H1 (cell line): ENCODE measurements at regions of chr20 and their contacts with region 1.

Region 1: GRCh38 chr20:35297155-35297554 is 4.9 kb upstream of the FAM83C start:
- DNase-seq: no peak
- H3K4me3 ChIP-seq: no peak overlapping the region
- H3K27ac ChIP-seq: no peak overlapping the region
- H3K4me1 ChIP-seq: no peaks in the 10 kb centered on the region; a peak in 2 of 7 replicates
- H3K27me3 ChIP-seq: no peaks in the 10 kb centered on the region
- CTCF ChIP-seq: no peak
- EP300 ChIP-seq: no peak
- POLR2A ChIP-seq: no peak
- RAD21 ChIP-seq: no peak

Region 2: DNA sequence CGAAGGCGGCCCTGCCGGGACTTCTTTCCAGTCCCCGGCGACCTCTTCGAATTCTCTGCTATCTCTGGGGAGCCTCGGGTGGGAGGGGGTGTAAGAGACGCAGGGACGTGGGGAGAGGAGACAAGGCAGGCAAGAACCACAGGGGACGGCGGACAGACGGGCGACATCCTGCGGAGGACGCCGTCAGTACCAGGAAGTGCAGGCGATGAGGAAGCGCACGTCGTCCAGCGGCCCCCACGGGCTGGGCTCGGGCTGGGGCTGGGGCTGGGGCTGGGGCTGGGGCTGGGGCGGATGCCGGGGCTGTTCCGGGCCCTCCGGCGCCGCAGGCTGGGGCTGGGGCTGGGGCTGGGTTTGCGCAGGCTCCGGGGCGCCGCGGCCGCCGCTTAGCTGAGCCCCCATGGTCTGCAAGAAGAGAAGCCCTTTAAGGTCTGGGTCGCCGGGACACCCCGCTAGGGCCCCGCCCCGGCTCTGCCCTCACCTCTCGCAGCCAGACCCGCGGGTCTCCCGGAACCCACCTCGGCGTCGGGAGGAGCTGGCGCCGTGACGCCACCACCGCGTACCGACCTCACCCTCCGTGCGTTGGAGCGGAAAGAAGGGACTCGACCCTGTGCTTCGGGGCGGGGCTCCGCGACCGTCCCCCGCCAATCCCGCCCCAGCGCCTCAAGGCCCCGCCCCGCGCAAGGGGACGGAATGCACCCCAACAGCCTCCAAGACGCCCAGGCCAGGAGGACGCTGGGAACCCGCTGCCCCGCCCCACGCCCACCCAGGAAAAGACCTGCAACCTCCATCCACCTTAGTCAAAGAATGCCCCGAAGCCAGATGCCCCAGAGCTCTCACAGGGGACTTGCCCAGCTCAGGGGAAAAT is 19.4 kb before region 1 on chr20 and contains the start of gene MMP24OS:
- CTCF ChIA-PET with region 1: interaction called, 104 read pairs
- POLR2A ChIA-PET with region 1: interaction called, 39 read pairs
- DNase-seq: peak; percentile 86 to 91
- H3K4me3 ChIP-seq: peak within 1 kb of the TSS; percentile 40 to 73 (median 66)
- H3K27ac ChIP-seq: 0 out of 2 replicates have a peak within 1 kb of the TSS, but pooled peaks have one; percentile 22
- H3K4me1 ChIP-seq: peaks cover 5 to 9% (median 7%) of the 10 kb centered on the region in 4 experiments; a peak in 6 of 7 replicates
- H3K27me3 ChIP-seq: no peaks in the 10 kb centered on the region
- CTCF ChIP-seq: peak in 2 of 3 experiments; percentile 11 to 47; a peak in 2 of 4 replicates
- EP300 ChIP-seq: no peak
- POLR2A ChIP-seq: peak; percentile 79 to 91
- RAD21 ChIP-seq: peak in 1 of 2 experiments; percentile 5; a peak in 1 of 4 replicates
- total RNA-seq, gene MMP24OS: 19.0 and 22.2 TPM in 2 replicates

Region 3: DNA sequence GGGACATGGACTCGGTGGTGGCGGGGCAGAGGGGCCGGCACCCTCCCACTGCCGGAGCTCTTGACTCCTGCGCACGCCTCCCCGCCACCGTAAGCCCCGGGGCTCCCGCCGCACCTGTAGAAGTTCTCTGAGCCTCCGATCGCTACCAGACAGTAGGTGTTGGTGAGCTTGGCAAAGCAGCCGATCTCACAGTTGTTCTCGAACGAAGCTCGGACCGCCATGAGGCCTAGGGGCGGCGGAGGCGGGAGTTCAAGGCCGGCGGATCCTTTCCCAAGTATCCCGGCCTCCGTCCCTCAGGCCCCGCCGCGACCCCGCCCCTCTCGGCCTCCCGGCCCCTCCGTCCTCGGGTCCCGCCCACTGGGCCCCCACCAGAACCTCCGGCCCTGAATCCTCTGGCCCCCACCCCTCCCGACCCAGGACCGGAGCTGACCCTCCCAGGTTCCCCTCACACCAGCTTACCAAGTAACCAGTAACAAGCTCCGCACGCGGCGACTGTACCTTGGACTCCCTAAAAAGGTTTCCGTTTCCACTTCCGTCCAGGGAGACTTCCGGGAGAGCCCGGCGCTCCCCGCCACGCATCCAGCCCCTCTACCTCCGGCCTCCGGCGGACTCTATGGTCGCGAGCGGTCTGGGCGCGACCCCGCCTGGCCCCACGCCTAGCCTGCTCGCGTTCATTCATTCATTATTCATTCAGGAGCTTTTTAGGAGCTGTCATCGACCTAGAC is 12.7 kb before region 1 on chr20 and contains the start of gene EIF6:
- CTCF ChIA-PET with region 1: interaction called, 104 read pairs
- POLR2A ChIA-PET with region 1: interaction called, 39 read pairs
- DNase-seq: peak; percentile 65 to 93
- H3K4me3 ChIP-seq: peak within 1 kb of the TSS; percentile 75 to 95 (median 92)
- H3K27ac ChIP-seq: peak within 1 kb of the TSS; percentile 13; the same call in 1 of the 2 replicates
- H3K4me1 ChIP-seq: peaks cover 3 to 8% (median 5%) of the 10 kb centered on the region in 4 experiments; a peak in 6 of 7 replicates
- H3K27me3 ChIP-seq: no peaks in the 10 kb centered on the region
- CTCF ChIP-seq: no peak
- EP300 ChIP-seq: no peak
- POLR2A ChIP-seq: no peak; a peak in 1 of 3 replicates
- RAD21 ChIP-seq: no peak
- total RNA-seq, gene EIF6: 183 and 184 TPM in 2 replicates